T-cell (primary cell): ENCODE measurements at regions of chr10 and their contacts with region 1.

Region 1: GRCh38 chr10:8065651-8066050 is 11.2 kb downstream of the GATA3 start:
- DNase-seq: no peak
- ATAC-seq: no peak
- H3K4me3 ChIP-seq: no peak overlapping the region
- H3K4me3 Mint-ChIP-seq: peak overlapping the region in 2 of 3 donors; percentile 19 to 55
- H3K27ac ChIP-seq: no peak overlapping the region
- H3K27ac Mint-ChIP-seq: peak overlapping the region; percentile 68 to 84
- H3K4me1 ChIP-seq: peaks cover 25 to 64% of the 10 kb centered on the region in 2 experiments
- H3K4me1 Mint-ChIP-seq: peaks cover 87 to 94% (median 90%) of the 10 kb centered on the region in 3 donors
- H3K27me3 ChIP-seq: no peaks in the 10 kb centered on the region
- H3K27me3 Mint-ChIP-seq: no peaks in the 10 kb centered on the region

Region 2: GRCh38 chr10:8221451-8221850 is 155.8 kb after region 1 on chr10:
- CTCF ChIA-PET with region 1: no interaction called
- POLR2A ChIA-PET with region 1: interaction called in 1 of 2 experiments, 15 read pairs
- DNase-seq: no peak
- ATAC-seq: no peak
- H3K4me3 ChIP-seq: no peak overlapping the region
- H3K4me3 Mint-ChIP-seq: no peak overlapping the region
- H3K27ac ChIP-seq: no peak overlapping the region
- H3K27ac Mint-ChIP-seq: no peak overlapping the region
- H3K4me1 ChIP-seq: peaks cover 2 to 6% of the 10 kb centered on the region in 2 experiments
- H3K4me1 Mint-ChIP-seq: peaks cover 10 to 15% (median 10%) of the 10 kb centered on the region in 3 donors
- H3K27me3 ChIP-seq: no peaks in the 10 kb centered on the region
- H3K27me3 Mint-ChIP-seq: no peaks in the 10 kb centered on the region